Activated naive CD4-positive, alpha-beta T cell treated with anti-CD3 and anti-CD28 coated beads for 36 hours (primary cell): ENCODE measurements at regions of chr13 and their contacts with region 1.

Region 1: GRCh38 chr13:41263261-41264027 is at the start of gene MTRF1:
- DNase-seq: peak; percentile 84
- H3K4me3 Mint-ChIP-seq: peak within 1 kb of the TSS; percentile 90
- H3K27ac Mint-ChIP-seq: peak within 1 kb of the TSS; percentile 95
- H3K4me1 Mint-ChIP-seq: peaks cover 24% of the 10 kb centered on the region
- H3K27me3 Mint-ChIP-seq: no peaks in the 10 kb centered on the region
- total RNA-seq, gene MTRF1: 23.2 to 28.4 TPM

Region 2: DNA sequence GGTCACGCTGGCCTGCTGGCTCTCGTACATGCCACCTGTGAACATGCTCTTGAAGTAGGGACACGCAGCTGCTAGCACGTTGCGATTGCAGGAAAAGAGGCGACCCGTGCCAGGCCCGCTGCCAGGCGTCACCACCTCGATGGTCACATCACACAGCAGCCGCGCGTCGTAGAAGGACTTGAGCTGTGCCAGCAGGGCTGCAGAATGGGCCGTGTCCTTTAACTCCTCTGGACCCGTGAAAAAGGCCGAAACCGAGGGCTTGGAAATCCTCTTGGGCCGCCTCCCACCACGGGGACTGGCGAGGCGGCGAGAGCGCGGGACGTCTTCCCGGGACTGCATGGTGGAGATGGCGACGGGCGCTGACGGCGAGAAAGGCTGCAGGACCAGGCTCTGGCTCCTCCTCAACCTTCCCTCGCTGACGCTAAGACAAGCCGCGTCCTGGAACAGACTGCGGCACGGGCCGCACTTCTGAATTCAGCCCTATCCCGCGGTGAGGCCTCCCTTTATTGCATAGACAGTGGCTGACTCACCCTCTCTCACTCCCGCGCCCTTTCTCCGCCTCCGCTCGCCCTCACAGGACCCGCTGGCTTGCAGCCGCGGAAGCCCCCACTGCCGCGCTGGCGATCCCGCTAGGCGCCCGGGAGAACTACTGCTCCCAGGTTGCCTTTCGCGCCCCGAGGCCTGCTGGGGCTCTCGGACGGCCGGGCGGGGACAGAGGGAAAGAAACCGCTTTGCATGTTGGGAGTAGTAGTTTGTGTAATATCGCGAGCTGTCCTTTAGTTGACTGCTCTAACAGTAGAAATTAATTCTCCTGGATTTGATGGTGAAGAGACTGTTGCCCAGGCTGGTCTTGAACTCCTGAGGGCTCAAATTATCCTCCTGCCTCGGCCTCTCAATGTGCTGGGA is 69.3 kb before region 1 on chr13 and contains the start of gene KBTBD7:
- CTCF ChIA-PET with region 1: interaction called, 3 read pairs
- intact Hi-C with region 1: loop called (anchors 1 kb)
- DNase-seq: peak; percentile 95
- H3K4me3 Mint-ChIP-seq: peak within 1 kb of the TSS; percentile 90
- H3K27ac Mint-ChIP-seq: peak within 1 kb of the TSS; percentile 89
- H3K4me1 Mint-ChIP-seq: peaks cover 37% of the 10 kb centered on the region
- H3K27me3 Mint-ChIP-seq: no peaks in the 10 kb centered on the region
- total RNA-seq, gene KBTBD7: 4.2 to 4.3 TPM

Region 3: GRCh38 chr13:41286370-41286769 is 22.9 kb after region 1 on chr13:
- CTCF ChIA-PET with region 1: no interaction called
- intact Hi-C with region 1: loop called (anchors 2 kb)
- DNase-seq: no peak
- H3K4me3 Mint-ChIP-seq: peak overlapping the region; percentile 43
- H3K27ac Mint-ChIP-seq: peak overlapping the region; percentile 52
- H3K4me1 Mint-ChIP-seq: peaks cover 30% of the 10 kb centered on the region
- H3K27me3 Mint-ChIP-seq: no peaks in the 10 kb centered on the region

Region 4: DNA sequence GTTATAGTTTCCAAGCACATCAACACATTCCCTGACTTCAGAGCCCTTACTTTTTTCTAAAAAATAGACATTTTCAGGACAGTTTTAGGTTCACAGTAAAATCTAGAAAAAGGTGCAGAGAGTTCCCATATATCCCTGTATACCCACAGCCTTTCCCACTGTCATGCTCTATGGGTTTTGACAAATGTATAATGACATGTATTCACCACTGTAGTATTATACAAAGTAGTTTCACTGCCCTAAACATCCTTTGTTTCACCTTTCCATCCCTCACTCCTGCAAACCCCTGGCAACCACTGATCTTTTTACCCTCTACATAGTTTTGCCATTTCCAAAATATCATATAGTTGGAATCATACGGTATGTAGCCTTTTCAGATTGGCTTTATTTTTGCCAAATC is 63.2 kb after region 1 on chr13:
- CTCF ChIA-PET with region 1: no interaction called
- intact Hi-C with region 1: no loop called
- DNase-seq: no peak
- H3K4me3 Mint-ChIP-seq: no peak overlapping the region
- H3K27ac Mint-ChIP-seq: no peak overlapping the region
- H3K4me1 Mint-ChIP-seq: peaks cover 30% of the 10 kb centered on the region
- H3K27me3 Mint-ChIP-seq: no peaks in the 10 kb centered on the region